ENCODE measurements at regions of chr17 and their contacts with region 1.

Region 1: GRCh38 chr17:80855948-80856862 is 135.4 kb upstream of the CHMP6 start:
- DNase-seq: peak; percentile 87 to 90
- H3K4me3 ChIP-seq: no peak overlapping the region; the same call in 1 of the 2 replicates
- H3K27ac ChIP-seq: peak overlapping the region; percentile 98
- H3K4me1 ChIP-seq: peaks cover 23% of the 10 kb centered on the region
- H3K27me3 ChIP-seq: no peaks in the 10 kb centered on the region
- CTCF ChIP-seq: no peak

Region 2: GRCh38 chr17:80892019-80892855 is 36.0 kb after region 1 on chr17:
- CTCF ChIA-PET with region 1: no interaction called
- POLR2A ChIA-PET with region 1: interaction called, 3 read pairs
- intact Hi-C with region 1: loop called (anchors 1 kb)
- DNase-seq: peak; percentile 83 to 85
- H3K4me3 ChIP-seq: peak overlapping the region; percentile 44; the same call in 1 of the 2 replicates
- H3K27ac ChIP-seq: peak overlapping the region; percentile 95
- H3K4me1 ChIP-seq: peaks cover 31% of the 10 kb centered on the region
- H3K27me3 ChIP-seq: no peaks in the 10 kb centered on the region
- CTCF ChIP-seq: 0 out of 2 replicates have a peak, but pooled peaks have one; percentile 0

Measured in PC-9 (cell line).